H1 (cell line): ENCODE measurements at regions of chr11 and their contacts with region 1.

Region 1: DNA sequence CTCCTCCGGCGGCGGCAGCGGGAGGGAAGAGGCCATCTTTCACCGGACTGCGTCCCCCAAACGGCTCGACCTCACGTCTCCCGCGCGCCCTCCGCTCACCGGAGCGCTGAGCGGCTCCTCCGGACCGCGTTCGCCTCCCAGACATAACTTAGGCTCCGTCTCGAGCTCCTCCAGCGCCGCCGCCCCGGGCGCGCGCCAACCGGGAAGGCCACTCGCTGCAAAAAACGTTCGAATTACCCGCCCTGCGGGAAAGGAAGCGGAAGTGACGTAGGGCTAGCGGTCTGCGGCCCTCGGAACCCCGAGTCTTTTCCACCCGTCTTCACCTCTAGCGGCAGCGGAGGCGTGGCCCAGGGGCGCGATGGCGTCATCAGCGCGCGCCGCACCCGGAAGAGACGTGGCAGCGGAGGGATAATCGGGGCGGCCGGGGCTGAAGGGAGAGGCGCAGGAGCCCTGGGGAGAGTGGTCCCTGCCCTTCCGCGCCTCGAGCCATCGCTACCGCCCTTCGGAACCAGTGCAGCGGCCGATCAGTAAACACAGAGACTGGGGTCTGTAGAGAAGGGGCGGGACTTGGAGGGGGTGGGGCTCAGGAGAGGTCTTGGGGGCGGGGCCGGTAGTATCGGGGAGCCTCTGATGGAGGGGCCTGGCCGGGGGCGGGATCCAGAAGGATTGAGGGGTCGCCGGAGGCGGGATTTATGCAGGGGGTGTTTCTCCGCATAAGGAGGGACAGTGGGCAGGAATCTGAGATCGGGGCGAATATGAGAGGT is at the starts of genes CDCA5 and ZFPL1:
- DNase-seq: peak; percentile 70 to 98
- H3K4me3 ChIP-seq: peak within 1 kb of the TSS; percentile 92 to 99 (median 98)
- H3K27ac ChIP-seq: peak within 1 kb of the TSS; percentile 94
- H3K4me1 ChIP-seq: peaks cover 0 to 9% (median 4%) of the 10 kb centered on the region in 4 experiments; a peak in 5 of 7 replicates
- H3K27me3 ChIP-seq: no peaks in the 10 kb centered on the region
- CTCF ChIP-seq: no peak; a peak in 1 of 4 replicates
- EP300 ChIP-seq: peak in 1 of 2 experiments; percentile 36; a peak in 1 of 3 replicates
- POLR2A ChIP-seq: peak; percentile 54 to 85
- RAD21 ChIP-seq: 0 out of 4 replicates have a peak, but pooled peaks of 1 of the 2 experiments have one; percentile 0
- total RNA-seq, gene CDCA5: 87.0 and 90.0 TPM in 2 replicates
- total RNA-seq, gene ZFPL1: 21.4 and 21.5 TPM in 2 replicates

Region 2: DNA sequence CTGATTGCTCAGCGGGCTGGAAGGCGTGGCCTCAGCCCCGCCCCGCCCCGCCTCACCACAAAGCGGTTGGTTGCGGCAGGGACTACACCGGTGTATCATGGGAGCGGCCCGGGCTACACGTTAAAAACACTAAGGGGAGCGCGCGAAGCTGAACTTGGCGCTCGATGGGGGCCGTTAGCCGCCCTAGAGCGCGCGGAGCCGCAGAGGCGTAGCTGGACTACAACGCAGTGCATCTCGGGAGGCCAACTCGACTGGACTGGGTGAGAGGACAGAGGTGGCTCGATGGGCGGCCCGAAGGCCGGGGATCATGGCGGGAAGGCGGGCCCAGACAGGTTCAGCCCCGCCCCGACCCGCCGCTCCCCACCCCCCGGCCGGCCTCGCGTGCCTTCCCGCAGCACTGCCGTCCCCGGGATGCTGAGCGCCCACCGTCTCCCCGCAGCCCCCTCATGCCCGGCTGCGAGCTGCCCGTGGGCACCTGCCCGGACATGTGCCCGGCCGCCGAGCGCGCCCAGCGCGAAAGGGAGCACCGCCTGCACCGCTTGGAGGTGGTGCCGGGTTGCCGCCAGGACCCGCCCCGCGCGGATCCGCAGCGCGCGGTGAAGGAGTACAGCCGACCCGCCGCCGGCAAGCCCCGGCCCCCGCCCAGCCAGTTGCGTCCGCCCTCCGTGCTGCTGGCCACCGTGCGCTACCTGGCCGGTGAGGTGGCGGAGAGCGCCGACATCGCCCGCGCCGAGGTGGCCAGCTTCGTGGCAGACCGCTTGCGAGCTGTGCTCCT is 43.0 kb before region 1 on chr11 and contains the start of gene SAC3D1:
- CTCF ChIA-PET with region 1: interaction called, 12 read pairs
- POLR2A ChIA-PET with region 1: interaction called, 10 read pairs
- DNase-seq: peak; percentile 80 to 94
- H3K4me3 ChIP-seq: peak within 1 kb of the TSS; percentile 48 to 93 (median 80)
- H3K27ac ChIP-seq: peak within 1 kb of the TSS; percentile 85; the same call in 1 of the 2 replicates
- H3K4me1 ChIP-seq: no peaks in the 10 kb centered on the region; a peak in 2 of 7 replicates
- H3K27me3 ChIP-seq: no peaks in the 10 kb centered on the region
- CTCF ChIP-seq: no peak
- EP300 ChIP-seq: no peak
- POLR2A ChIP-seq: peak; percentile 58 to 60
- RAD21 ChIP-seq: no peak
- total RNA-seq, gene SAC3D1: 19.4 and 23.3 TPM in 2 replicates

Region 3: DNA sequence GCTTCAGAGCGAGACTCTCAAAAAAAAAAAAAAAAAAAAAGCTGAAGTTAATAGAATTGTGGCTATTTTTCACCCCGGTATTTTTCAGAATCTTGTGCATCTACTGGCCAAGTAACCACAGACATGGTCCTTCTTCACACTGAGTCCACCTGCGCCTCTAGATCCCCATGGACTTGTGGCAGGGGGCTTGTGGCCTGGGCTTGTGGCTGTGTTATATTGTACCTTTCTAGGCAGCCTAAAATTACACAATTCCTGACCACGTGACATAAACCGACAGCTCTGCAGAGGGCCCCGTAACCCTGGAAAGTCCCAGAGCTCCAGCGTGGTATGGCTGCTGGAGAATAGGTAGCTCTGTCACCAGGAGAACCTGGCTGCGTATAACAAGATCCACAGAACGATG is 14.8 kb before region 1 on chr11:
- CTCF ChIA-PET with region 1: interaction called, 3 read pairs
- POLR2A ChIA-PET with region 1: interaction called, 230 read pairs
- DNase-seq: no peak
- H3K4me3 ChIP-seq: no peak overlapping the region
- H3K27ac ChIP-seq: no peak overlapping the region
- H3K4me1 ChIP-seq: peaks cover 5 to 23% (median 17%) of the 10 kb centered on the region in 4 experiments
- H3K27me3 ChIP-seq: no peaks in the 10 kb centered on the region
- CTCF ChIP-seq: no peak
- EP300 ChIP-seq: no peak
- POLR2A ChIP-seq: no peak
- RAD21 ChIP-seq: no peak

Region 4: DNA sequence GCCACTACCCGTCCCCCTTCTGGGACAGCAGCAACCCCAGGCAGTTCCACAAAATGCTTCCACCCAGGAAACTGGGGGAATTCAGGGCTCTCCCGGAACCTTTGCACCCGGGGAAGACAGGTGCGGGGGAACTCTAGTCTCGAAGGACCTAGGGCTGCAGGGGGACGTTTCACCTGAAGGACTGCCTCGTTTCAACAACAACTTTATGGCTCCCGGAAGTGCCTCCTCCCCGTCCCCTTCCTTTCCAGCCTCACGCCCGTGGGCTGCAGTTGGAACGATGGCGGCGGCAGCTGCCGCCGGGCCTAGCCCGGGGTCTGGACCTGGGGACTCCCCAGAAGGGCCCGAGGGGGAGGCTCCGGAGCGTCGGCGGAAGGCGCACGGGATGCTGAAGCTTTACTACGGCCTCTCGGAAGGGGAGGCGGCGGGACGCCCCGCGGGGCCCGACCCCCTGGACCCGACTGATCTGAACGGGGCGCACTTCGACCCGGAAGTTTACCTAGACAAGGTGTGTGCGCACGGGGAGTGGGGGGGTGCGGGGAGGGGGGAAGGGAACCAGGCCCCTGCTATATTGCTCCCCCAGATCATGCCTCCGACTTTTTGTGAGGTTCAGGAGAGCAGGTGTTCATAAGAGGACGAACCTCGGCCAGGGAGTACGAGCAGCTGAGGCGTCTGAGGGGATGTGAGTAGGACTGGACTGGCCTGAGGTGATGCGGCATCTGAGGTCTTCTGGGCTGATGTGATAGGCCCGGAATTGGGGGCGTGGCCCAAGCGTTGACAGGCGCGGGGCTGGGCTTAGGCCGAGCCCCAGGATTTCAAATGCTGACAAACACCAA is 12.2 kb after region 1 on chr11 and contains the start of gene VPS51:
- CTCF ChIA-PET with region 1: interaction called, 4 read pairs
- POLR2A ChIA-PET with region 1: interaction called, 230 read pairs
- DNase-seq: peak; percentile 70 to 93
- H3K4me3 ChIP-seq: peak within 1 kb of the TSS; percentile 78 to 88 (median 78)
- H3K27ac ChIP-seq: peak within 1 kb of the TSS; percentile 67; the same call in 1 of the 2 replicates
- H3K4me1 ChIP-seq: peaks cover 0 to 6% (median 4%) of the 10 kb centered on the region in 4 experiments; a peak in 6 of 7 replicates
- H3K27me3 ChIP-seq: no peaks in the 10 kb centered on the region
- CTCF ChIP-seq: no peak
- EP300 ChIP-seq: peak in 1 of 2 experiments; percentile 86; a peak in 2 of 3 replicates
- POLR2A ChIP-seq: peak; percentile 75 to 86
- RAD21 ChIP-seq: no peak
- total RNA-seq, gene VPS51: 97.4 and 108 TPM in 2 replicates

Region 5: GRCh38 chr11:65117216-65118096 is 33.4 kb after region 1 on chr11 and contains the start of gene ZNHIT2:
- CTCF ChIA-PET with region 1: interaction called, 4 read pairs
- POLR2A ChIA-PET with region 1: interaction called, 186 read pairs
- DNase-seq: peak; percentile 98 to 99
- H3K4me3 ChIP-seq: peak within 1 kb of the TSS; percentile 61 to 83 (median 72)
- H3K27ac ChIP-seq: peak within 1 kb of the TSS; percentile 78
- H3K4me1 ChIP-seq: peaks cover 2 to 22% (median 13%) of the 10 kb centered on the region in 4 experiments
- H3K27me3 ChIP-seq: no peaks in the 10 kb centered on the region
- CTCF ChIP-seq: peak in 2 of 3 experiments; percentile 79 to 92; a peak in 3 of 4 replicates
- EP300 ChIP-seq: peak in 1 of 2 experiments; percentile 75; a peak in 1 of 3 replicates
- POLR2A ChIP-seq: peak in 1 of 2 experiments; percentile 89; a peak in 2 of 3 replicates
- RAD21 ChIP-seq: peak; percentile 76 to 80
- total RNA-seq, gene ZNHIT2: 13.0 and 14.8 TPM in 2 replicates

Region 6: GRCh38 chr11:65180877-65181568 is 97.0 kb after region 1 on chr11:
- CTCF ChIA-PET with region 1: no interaction called
- POLR2A ChIA-PET with region 1: no interaction called
- DNase-seq: peak in 1 of 2 experiments; percentile 90
- H3K4me3 ChIP-seq: peak overlapping the region; percentile 65 to 82 (median 74)
- H3K27ac ChIP-seq: no peak overlapping the region
- H3K4me1 ChIP-seq: peaks cover 7 to 32% (median 21%) of the 10 kb centered on the region in 4 experiments
- H3K27me3 ChIP-seq: no peaks in the 10 kb centered on the region
- CTCF ChIP-seq: peak; percentile 51 to 74 (median 69)
- EP300 ChIP-seq: no peak
- POLR2A ChIP-seq: peak in 1 of 2 experiments; percentile 52; a peak in 2 of 3 replicates
- RAD21 ChIP-seq: peak; percentile 65 to 71